ENCODE measurements at regions of chr3 and their contacts with region 1.

Region 1: DNA sequence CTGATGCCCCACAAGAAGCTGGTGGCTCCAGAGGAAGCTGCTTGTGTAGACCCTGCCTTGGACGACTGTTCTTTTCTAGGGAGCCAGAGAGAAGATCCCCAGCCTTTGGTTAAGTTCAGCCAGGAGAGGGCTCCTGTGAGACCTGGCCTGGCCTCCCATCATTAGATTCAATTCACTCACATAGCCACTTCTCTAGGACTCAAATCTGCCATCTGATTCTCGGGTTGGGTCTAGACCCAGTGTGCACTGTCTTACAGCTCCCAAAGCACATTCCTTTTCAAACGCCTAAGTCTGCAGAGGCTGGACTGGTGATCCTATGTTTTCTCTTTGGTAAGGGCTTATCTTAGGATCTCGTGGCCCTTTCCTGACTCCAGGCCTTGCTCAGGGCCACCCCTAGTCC is 81.7 kb upstream of the NPHP3 start:
- DNase-seq: no peak
- ATAC-seq: peak; percentile 72
- H3K4me3 ChIP-seq: no peak overlapping the region
- H3K27ac ChIP-seq: no peak overlapping the region
- H3K4me1 ChIP-seq: no peaks in the 10 kb centered on the region
- H3K27me3 ChIP-seq: 0 out of 2 replicates have a peak, but pooled peaks cover 6% of the 10 kb centered on the region
- CTCF ChIP-seq: peak in 2 of 3 experiments; percentile 31; a peak in 4 of 6 replicates
- POLR2A ChIP-seq: no peak
- RAD21 ChIP-seq: peak; percentile 18; the same call in 1 of the 2 replicates

Region 2: GRCh38 chr3:132749786-132750185 is 54.1 kb before region 1 on chr3:
- CTCF ChIA-PET with region 1: no interaction called
- POLR2A ChIA-PET with region 1: no interaction called
- RAD21 ChIA-PET with region 1: no interaction called
- intact Hi-C with region 1: loop called (anchors 10 kb)
- DNase-seq: no peak
- ATAC-seq: no peak
- H3K4me3 ChIP-seq: no peak overlapping the region
- H3K27ac ChIP-seq: no peak overlapping the region
- H3K4me1 ChIP-seq: no peaks in the 10 kb centered on the region
- H3K27me3 ChIP-seq: peaks cover 45% of the 10 kb centered on the region
- CTCF ChIP-seq: no peak
- POLR2A ChIP-seq: no peak
- RAD21 ChIP-seq: no peak

Measured in HCT116 (cell line).